T-cell (primary cell): ENCODE measurements at regions of chr1 and their contacts with region 1.

Region 1: GRCh38 chr1:116737020-116737854 is 17.0 kb upstream of the CD2 start:
- DNase-seq: peak; percentile 55 to 88 (median 72)
- ATAC-seq: peak; percentile 57 to 83 (median 79)
- H3K4me3 ChIP-seq: peak overlapping the region in 1 of 2 donors; percentile 7
- H3K4me3 Mint-ChIP-seq: peak overlapping the region; percentile 56 to 76 (median 75)
- H3K27ac ChIP-seq: peak overlapping the region; percentile 96
- H3K27ac Mint-ChIP-seq: peak overlapping the region; percentile 97 to 98
- H3K4me1 ChIP-seq: peaks cover 31 to 48% of the 10 kb centered on the region in 2 experiments
- H3K4me1 Mint-ChIP-seq: peaks cover 45 to 49% (median 48%) of the 10 kb centered on the region in 3 donors
- H3K27me3 ChIP-seq: no peaks in the 10 kb centered on the region
- H3K27me3 Mint-ChIP-seq: no peaks in the 10 kb centered on the region

Region 2: GRCh38 chr1:116754198-116754977 is 17.2 kb after region 1 on chr1 and contains the start of gene CD2:
- CTCF ChIA-PET with region 1: interaction called, 5 to 66 read pairs
- POLR2A ChIA-PET with region 1: interaction called, 10 to 51 read pairs
- DNase-seq: peak in 33 of 35 experiments; percentile 34 to 75 (median 58)
- ATAC-seq: peak; percentile 82 to 89 (median 84)
- H3K4me3 ChIP-seq: peak within 1 kb of the TSS; percentile 81 to 91
- H3K4me3 Mint-ChIP-seq: peak within 1 kb of the TSS; percentile 96 to 100 (median 99)
- H3K27ac ChIP-seq: peak within 1 kb of the TSS; percentile 80
- H3K27ac Mint-ChIP-seq: peak within 1 kb of the TSS; percentile 96 to 98
- H3K4me1 ChIP-seq: peaks cover 16 to 20% of the 10 kb centered on the region in 2 experiments
- H3K4me1 Mint-ChIP-seq: peaks cover 35 to 68% (median 40%) of the 10 kb centered on the region in 3 donors
- H3K27me3 ChIP-seq: no peaks in the 10 kb centered on the region
- H3K27me3 Mint-ChIP-seq: no peaks in the 10 kb centered on the region
- total RNA-seq, gene CD2: 119 to 209 (median 158) TPM

Region 3: DNA sequence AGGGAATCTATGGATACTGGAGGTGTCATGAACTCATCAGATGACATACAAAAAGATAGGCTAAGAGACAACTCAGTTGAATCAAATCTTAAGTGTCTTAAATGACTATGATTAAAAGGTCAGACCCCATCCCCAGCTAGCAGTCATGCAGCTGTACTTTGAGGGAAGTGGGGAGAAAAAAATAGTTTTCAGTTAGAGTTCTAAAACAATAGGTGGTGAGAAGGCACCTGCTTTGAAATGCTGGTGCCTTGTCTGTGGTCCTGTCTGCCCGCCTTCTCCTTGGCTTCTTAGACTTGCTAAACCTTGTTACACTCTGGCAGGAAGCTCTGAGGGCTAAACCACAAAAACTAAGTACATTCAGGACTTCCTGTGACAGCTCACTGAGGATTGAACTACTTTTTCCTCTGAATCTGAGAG is 32.3 kb after region 1 on chr1:
- CTCF ChIA-PET with region 1: interaction called, 5 to 55 read pairs
- POLR2A ChIA-PET with region 1: interaction called, 9 to 15 read pairs
- DNase-seq: peak in 33 of 35 experiments; percentile 60 to 91 (median 75)
- ATAC-seq: peak; percentile 86 to 90 (median 88)
- H3K4me3 ChIP-seq: peak overlapping the region; percentile 19 to 41
- H3K4me3 Mint-ChIP-seq: peak overlapping the region; percentile 58 to 100 (median 69)
- H3K27ac ChIP-seq: peak overlapping the region; percentile 87
- H3K27ac Mint-ChIP-seq: peak overlapping the region; percentile 99 to 100
- H3K4me1 ChIP-seq: peaks cover 73 to 75% of the 10 kb centered on the region in 2 experiments
- H3K4me1 Mint-ChIP-seq: peaks cover 87 to 90% (median 89%) of the 10 kb centered on the region in 3 donors
- H3K27me3 ChIP-seq: no peaks in the 10 kb centered on the region
- H3K27me3 Mint-ChIP-seq: no peaks in the 10 kb centered on the region

Region 4: GRCh38 chr1:116881879-116882520 is 144.8 kb after region 1 on chr1:
- CTCF ChIA-PET with region 1: interaction called, 6 to 28 read pairs
- POLR2A ChIA-PET with region 1: interaction called in 1 of 2 experiments, 4 read pairs
- DNase-seq: peak in 6 of 35 experiments; percentile 2 to 41 (median 6)
- ATAC-seq: peak in 1 of 4 experiments; percentile 18
- H3K4me3 ChIP-seq: no peak overlapping the region
- H3K4me3 Mint-ChIP-seq: no peak overlapping the region
- H3K27ac ChIP-seq: no peak overlapping the region
- H3K27ac Mint-ChIP-seq: peak overlapping the region in 1 of 2 donors; percentile 13
- H3K4me1 ChIP-seq: peaks cover 20 to 21% of the 10 kb centered on the region in 2 experiments
- H3K4me1 Mint-ChIP-seq: peaks cover 0 to 4% (median 0%) of the 10 kb centered on the region in 3 donors
- H3K27me3 ChIP-seq: peaks cover 0 to 8% of the 10 kb centered on the region in 2 experiments
- H3K27me3 Mint-ChIP-seq: no peaks in the 10 kb centered on the region

Region 5: GRCh38 chr1:117054068-117054467 is 316.8 kb after region 1 on chr1:
- CTCF ChIA-PET with region 1: interaction called, 29 to 34 read pairs
- POLR2A ChIA-PET with region 1: interaction called in 1 of 2 experiments, 3 read pairs
- DNase-seq: no peak
- ATAC-seq: no peak
- H3K4me3 ChIP-seq: no peak overlapping the region
- H3K4me3 Mint-ChIP-seq: no peak overlapping the region
- H3K27ac ChIP-seq: no peak overlapping the region
- H3K27ac Mint-ChIP-seq: no peak overlapping the region
- H3K4me1 ChIP-seq: peaks cover 19 to 32% of the 10 kb centered on the region in 2 experiments
- H3K4me1 Mint-ChIP-seq: peaks cover 48 to 53% (median 51%) of the 10 kb centered on the region in 3 donors
- H3K27me3 ChIP-seq: no peaks in the 10 kb centered on the region
- H3K27me3 Mint-ChIP-seq: no peaks in the 10 kb centered on the region

Region 6: GRCh38 chr1:117128323-117129079 is 391.3 kb after region 1 on chr1:
- CTCF ChIA-PET with region 1: interaction called, 3 to 13 read pairs
- POLR2A ChIA-PET with region 1: no interaction called
- DNase-seq: peak in 1 of 35 experiments; percentile 52
- ATAC-seq: peak in 2 of 4 experiments; percentile 32 to 57
- H3K4me3 ChIP-seq: no peak overlapping the region
- H3K4me3 Mint-ChIP-seq: no peak overlapping the region
- H3K27ac ChIP-seq: no peak overlapping the region
- H3K27ac Mint-ChIP-seq: no peak overlapping the region
- H3K4me1 ChIP-seq: no peaks in the 10 kb centered on the region
- H3K4me1 Mint-ChIP-seq: peaks cover 0 to 2% (median 2%) of the 10 kb centered on the region in 3 donors
- H3K27me3 ChIP-seq: peaks cover 0 to 8% of the 10 kb centered on the region in 2 experiments
- H3K27me3 Mint-ChIP-seq: peaks cover 0 to 8% of the 10 kb centered on the region in 2 donors